ENCODE measurements at regions of chrX and their contacts with region 1.

Region 1: GRCh38 chrX:51860679-51861078 is 32.7 kb upstream of the MAGED1 start:
- DNase-seq: peak; percentile 13
- ATAC-seq: peak; percentile 79
- H3K4me3 Mint-ChIP-seq: no peak overlapping the region
- H3K27ac Mint-ChIP-seq: peak overlapping the region; percentile 80
- H3K4me1 Mint-ChIP-seq: peaks cover 18% of the 10 kb centered on the region
- H3K27me3 Mint-ChIP-seq: no peaks in the 10 kb centered on the region
- CTCF ChIP-seq: peak; percentile 20; the same call in 1 of the 2 replicates

Region 2: DNA sequence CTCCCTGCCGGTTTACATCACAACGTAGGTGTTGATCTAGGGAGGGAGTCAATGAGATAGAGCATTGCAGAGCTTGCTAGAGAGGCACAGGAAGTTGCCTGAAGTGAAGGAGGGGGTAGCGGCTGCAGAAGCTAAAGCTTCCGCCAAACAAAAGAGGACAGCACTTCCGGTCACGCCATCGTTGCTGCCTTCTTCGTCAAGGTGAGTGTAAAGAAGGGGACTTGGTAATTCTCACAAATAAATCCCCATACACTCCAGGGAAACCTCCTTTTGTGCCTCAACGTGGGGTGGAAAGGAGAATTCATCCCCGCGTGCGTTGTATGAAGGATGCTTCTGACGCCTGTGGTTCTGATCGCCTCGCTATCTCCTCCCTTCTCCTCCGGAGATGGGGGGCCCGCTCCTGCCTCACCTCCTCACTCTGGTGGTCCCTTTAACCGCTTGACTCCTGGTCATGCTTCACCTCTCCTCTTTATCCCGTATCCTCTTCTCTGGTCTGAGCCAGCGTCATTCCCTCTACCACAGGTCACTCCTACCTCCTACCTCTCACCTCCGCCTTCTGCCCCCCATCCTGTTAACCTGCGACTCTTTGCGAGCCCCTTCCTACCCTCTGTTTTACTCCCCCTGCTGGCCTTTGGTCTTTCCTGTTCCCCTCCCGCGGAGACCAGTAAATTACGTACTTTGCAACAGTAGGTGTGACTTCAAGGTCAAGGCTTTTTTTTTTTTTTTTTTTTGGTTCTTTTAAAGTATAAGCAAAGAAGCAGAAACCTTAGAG is 57.6 kb before region 1 on chrX:
- CTCF ChIA-PET with region 1: interaction called, 10 read pairs
- POLR2A ChIA-PET with region 1: no interaction called
- DNase-seq: peak; percentile 59
- ATAC-seq: peak; percentile 93
- H3K4me3 Mint-ChIP-seq: peak overlapping the region; percentile 91
- H3K27ac Mint-ChIP-seq: peak overlapping the region; percentile 99
- H3K4me1 Mint-ChIP-seq: peaks cover 18% of the 10 kb centered on the region
- H3K27me3 Mint-ChIP-seq: no peaks in the 10 kb centered on the region
- CTCF ChIP-seq: no peak

Measured in WTC11 (cell line).